Activated B cell treated with CpG ODN at 0.5 μM for 24 hours (primary cell): ENCODE measurements at regions of chr12 and their contacts with region 1.

Region 1: DNA sequence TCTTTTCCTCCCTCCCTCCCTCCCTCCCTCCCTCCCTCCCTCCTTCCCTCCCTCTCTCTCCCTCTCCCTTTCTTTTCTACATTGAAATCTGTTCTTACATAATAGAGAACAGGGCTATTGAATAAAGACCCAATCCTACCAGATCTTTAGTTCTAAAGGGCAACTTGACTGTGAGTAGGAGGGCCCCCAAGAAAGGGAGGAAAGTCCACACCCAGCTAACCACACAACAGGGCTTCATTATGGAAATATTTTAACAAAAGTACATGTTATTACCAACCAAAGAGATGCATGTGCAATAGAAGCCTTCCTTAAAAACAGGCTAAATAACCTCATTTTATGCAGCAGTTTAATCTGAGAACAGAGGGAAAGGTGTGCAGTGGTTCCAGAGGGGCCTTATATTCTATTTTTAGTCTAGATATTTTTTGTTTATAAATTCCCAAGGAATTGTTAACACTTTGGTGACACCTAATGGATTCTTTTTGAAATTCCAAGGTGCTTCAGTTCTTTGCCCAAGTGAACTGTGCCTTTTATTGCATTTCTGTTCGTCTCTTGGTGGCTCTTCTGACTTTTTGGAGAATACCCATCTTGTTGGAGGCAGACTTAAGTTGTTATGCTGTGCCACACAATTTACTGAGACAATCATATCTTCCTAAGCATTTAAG is 63.0 kb downstream of the GNS start:
- DNase-seq: no peak
- ATAC-seq: no peak
- H3K4me3 Mint-ChIP-seq: no peak overlapping the region
- H3K27ac Mint-ChIP-seq: no peak overlapping the region
- H3K4me1 Mint-ChIP-seq: peaks cover 29% of the 10 kb centered on the region
- H3K27me3 Mint-ChIP-seq: no peaks in the 10 kb centered on the region
- CTCF ChIP-seq: no peak

Region 2: GRCh38 chr12:64544371-64545080 is 151.7 kb before region 1 on chr12:
- CTCF ChIA-PET with region 1: interaction called, 171 read pairs
- POLR2A ChIA-PET with region 1: interaction called, 8 read pairs
- intact Hi-C with region 1: loop called (anchors 1 kb)
- DNase-seq: no peak
- ATAC-seq: no peak
- H3K4me3 Mint-ChIP-seq: no peak overlapping the region
- H3K27ac Mint-ChIP-seq: no peak overlapping the region
- H3K4me1 Mint-ChIP-seq: no peaks in the 10 kb centered on the region
- H3K27me3 Mint-ChIP-seq: peaks cover 5% of the 10 kb centered on the region
- CTCF ChIP-seq: no peak

Region 3: DNA sequence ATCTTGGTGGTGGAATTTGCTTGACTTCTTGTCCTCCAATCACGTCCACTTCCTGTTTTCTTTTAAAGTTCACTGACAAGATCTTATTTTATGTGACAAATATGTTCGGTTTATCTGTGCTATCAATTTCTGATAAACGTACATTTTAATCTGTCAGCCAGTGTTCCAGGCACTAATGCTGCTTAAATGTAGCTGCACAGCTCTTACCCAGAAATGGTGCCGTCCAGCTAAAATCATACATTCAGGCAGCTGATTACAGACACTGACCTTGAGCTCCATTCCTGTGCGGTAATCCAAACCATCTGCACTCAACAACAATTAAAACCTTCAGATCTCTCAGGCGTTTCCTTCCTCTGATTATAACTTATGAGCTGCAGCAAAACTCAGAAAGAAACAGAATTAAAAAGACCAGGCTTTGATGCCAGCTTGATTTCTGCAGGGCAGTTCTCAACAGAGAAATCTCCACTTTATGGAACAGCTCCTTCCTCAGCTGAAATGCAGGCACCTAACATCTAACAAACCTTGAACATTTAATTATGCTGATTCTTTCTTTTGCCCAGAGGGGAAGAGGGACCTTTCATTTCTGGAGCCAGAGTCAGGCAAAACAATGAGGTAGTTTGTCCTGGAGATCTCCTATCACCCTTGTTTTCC is 112.3 kb before region 1 on chr12:
- CTCF ChIA-PET with region 1: interaction called, 5 read pairs
- POLR2A ChIA-PET with region 1: no interaction called
- intact Hi-C with region 1: loop called (anchors 1 kb)
- DNase-seq: no peak
- ATAC-seq: no peak
- H3K4me3 Mint-ChIP-seq: peak overlapping the region; percentile 62
- H3K27ac Mint-ChIP-seq: no peak overlapping the region
- H3K4me1 Mint-ChIP-seq: peaks cover 13% of the 10 kb centered on the region
- H3K27me3 Mint-ChIP-seq: no peaks in the 10 kb centered on the region
- CTCF ChIP-seq: no peak

Region 4: DNA sequence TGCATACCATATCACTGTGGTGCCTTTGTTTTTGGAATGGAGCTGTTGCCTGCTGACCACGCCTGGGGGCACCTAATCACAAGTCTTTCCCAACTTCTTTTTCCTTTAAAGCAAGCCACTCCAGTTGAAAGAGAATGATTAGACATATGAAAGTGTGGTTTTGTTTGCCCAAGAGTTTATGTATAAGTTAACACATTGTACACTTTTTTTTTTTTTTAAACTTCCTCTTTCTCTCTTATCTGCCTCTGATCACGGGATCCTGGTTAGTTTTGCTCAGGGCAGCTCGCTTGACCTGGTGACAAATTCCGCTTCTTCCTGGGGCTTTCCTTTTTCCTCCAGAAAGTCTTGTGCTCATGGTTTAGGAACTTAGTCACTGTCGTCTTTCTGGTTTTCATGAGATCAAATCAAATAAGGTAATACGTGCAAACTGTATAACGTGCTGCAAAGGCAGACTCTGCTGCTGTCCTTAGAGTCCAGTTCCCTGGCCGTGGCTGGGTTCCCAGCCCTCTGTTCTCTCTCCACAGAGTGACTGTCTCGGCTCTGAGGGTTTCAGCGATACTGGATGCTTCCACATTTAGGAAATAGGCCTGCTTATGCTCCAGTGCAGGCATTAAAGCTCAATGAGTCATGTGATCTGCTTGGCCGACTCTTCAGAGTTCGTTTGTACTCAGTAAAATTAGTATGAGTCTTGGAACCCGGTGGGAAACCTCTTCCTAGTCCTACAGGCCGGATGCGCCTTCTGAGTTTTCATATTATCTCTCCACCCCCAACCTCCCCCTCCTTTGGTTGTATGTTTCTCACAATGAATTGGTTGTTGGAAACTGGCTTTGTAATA is 70.8 kb before region 1 on chr12:
- CTCF ChIA-PET with region 1: interaction called, 9 read pairs
- POLR2A ChIA-PET with region 1: interaction called, 4 read pairs
- intact Hi-C with region 1: loop called (anchors 2 kb)
- DNase-seq: no peak
- ATAC-seq: peak; percentile 51
- H3K4me3 Mint-ChIP-seq: peak overlapping the region; percentile 85
- H3K27ac Mint-ChIP-seq: peak overlapping the region; percentile 96
- H3K4me1 Mint-ChIP-seq: peaks cover 85% of the 10 kb centered on the region
- H3K27me3 Mint-ChIP-seq: no peaks in the 10 kb centered on the region
- CTCF ChIP-seq: no peak

Region 5: DNA sequence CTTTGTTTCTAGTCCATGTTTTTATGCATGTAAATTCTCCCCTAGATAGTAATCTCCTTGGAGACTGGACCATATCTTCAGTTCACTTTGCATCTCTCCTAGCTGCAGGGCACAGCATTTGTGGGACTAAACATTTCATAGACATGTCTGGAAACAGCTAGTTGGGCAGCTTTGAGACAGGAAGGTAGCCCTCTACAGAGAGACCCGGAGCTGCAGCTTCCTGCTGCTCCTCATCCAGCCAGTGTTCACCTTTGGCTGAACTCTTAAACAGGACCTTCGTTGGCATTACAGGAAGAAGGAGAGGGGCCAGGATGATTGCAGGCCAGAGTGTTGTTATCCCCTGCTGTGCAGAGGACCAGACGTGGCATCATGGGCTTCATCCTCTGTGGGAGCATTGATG is 10.1 kb after region 1 on chr12:
- CTCF ChIA-PET with region 1: interaction called, 12 read pairs
- POLR2A ChIA-PET with region 1: no interaction called
- intact Hi-C with region 1: no loop called
- DNase-seq: no peak
- ATAC-seq: no peak
- H3K4me3 Mint-ChIP-seq: no peak overlapping the region
- H3K27ac Mint-ChIP-seq: no peak overlapping the region
- H3K4me1 Mint-ChIP-seq: peaks cover 5% of the 10 kb centered on the region
- H3K27me3 Mint-ChIP-seq: no peaks in the 10 kb centered on the region
- CTCF ChIP-seq: no peak